ENCODE measurements at regions of chr21 and their contacts with region 1.

Region 1: DNA sequence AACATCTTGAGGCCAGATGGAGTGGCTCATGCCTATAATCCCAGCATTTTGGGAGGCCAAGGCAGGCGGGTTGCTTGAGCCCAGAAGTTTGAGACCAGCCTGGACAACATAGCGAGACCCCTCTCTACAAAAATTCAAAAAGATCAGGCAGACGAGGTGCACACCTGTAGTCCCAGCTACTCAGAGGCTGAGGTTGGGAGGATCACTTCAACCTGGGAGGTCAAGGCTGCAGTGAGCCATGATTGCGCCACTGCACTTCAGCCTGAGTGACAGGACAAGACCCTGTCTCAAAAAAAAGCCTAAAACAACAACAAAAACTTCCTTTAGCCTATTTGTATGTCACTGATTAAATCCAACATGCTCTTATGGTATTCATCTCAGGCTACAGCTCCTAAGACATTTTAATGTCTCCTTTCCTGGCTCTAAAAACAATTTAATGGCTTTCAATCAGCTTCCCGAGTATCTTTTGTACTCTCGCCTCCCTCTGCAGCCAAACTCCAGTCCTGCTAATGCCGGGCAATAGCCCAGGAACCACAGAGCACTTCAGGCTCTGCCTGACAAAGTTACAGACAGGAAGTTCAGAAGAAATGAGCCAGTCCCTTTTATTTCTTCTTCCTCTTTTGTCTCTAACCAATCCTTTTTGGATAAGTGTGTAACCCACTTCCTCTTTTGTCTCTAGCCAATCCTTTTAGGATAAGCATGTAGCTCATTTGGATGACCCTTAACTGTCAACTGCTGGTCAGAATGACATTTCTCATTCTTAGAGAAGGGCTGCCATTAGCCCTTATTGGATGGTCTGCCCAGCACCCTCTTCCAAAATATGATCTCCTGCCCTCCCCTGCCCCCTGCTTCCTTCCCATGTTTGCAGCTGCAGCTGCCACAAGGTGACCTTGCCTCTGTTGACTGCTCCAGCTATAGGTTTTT is 6.6 kb upstream of the DOP1B start:
- DNase-seq: no peak
- H3K4me3 ChIP-seq: no peak overlapping the region
- H3K27me3 ChIP-seq: no peaks in the 10 kb centered on the region
- CTCF ChIP-seq: no peak

Region 2: DNA sequence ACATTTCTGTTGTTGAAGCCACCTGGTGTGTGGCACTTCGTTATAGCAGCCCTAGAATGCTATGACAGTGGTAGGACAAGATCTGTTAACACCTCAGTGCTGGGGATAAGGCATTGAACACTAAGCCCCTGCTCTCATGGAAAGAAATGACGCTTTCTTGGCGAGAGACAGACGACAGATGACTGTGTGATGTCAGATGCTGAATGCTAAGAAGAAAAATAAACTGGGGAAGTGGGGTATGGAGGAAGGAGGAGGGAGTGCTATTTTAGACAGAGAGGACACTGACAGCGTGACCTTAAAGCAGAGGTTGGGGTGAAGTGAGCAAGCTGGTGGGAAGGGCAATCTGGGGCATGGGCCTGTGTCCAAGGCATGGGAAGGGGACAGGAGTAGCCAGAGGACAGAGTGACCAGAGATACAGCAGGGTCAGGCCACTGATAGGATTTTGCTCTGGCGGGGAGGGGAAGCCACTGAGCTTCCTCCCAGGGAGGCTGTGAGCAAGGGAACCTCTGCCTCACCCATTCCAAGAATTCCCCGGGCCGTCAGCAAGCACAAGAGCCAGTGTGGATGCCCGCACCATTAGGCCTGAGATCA is 21.8 kb after region 1 on chr21:
- CTCF ChIA-PET with region 1: no interaction called
- POLR2A ChIA-PET with region 1: no interaction called
- DNase-seq: no peak
- H3K4me3 ChIP-seq: no peak overlapping the region
- H3K27me3 ChIP-seq: no peaks in the 10 kb centered on the region
- CTCF ChIP-seq: no peak

Region 3: DNA sequence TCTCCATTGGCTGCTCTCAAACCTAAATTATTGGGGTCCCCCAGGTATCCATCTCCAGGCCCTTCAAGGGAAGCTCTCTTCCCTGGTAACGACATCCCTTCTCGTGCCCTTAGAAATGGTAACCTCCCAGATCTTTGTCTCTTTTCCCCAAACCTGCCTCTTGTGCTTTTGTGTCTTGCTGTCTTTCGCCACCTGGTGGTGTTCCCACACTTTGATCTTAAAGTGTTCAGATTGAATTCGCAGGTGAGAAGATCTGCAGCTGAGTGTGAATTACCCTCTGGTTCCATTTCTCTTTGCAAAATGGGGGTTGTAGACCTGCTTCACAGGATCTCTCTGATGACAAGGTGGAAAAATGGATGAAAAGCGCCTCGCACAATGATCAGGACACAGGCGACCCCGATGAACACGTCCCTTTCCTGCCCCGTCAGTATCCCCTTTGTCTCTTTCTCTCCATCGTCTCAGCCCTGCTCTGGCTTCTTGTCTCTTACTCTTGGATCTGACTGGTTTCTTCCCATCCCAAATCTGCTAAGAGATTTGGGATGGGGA is 59.6 kb after region 1 on chr21:
- CTCF ChIA-PET with region 1: interaction called, 39 read pairs
- POLR2A ChIA-PET with region 1: no interaction called
- DNase-seq: no peak
- H3K4me3 ChIP-seq: no peak overlapping the region
- H3K27me3 ChIP-seq: no peaks in the 10 kb centered on the region
- CTCF ChIP-seq: peak; percentile 63

Measured in BJ (cell line).